ENCODE measurements at regions of chr1 and their contacts with region 1.

Region 1: GRCh38 chr1:37978541-37978940 is 11.3 kb downstream of the SF3A3 start:
- DNase-seq: no peak
- ATAC-seq: no peak
- H3K4me3 ChIP-seq: no peak overlapping the region
- H3K4me3 Mint-ChIP-seq: no peak overlapping the region
- H3K27ac ChIP-seq: no peak overlapping the region
- H3K27ac Mint-ChIP-seq: no peak overlapping the region
- H3K4me1 ChIP-seq: no peaks in the 10 kb centered on the region
- H3K4me1 Mint-ChIP-seq: peaks cover 5% of the 10 kb centered on the region
- H3K27me3 ChIP-seq: no peaks in the 10 kb centered on the region
- H3K27me3 Mint-ChIP-seq: no peaks in the 10 kb centered on the region
- CTCF ChIP-seq: no peak

Region 2: DNA sequence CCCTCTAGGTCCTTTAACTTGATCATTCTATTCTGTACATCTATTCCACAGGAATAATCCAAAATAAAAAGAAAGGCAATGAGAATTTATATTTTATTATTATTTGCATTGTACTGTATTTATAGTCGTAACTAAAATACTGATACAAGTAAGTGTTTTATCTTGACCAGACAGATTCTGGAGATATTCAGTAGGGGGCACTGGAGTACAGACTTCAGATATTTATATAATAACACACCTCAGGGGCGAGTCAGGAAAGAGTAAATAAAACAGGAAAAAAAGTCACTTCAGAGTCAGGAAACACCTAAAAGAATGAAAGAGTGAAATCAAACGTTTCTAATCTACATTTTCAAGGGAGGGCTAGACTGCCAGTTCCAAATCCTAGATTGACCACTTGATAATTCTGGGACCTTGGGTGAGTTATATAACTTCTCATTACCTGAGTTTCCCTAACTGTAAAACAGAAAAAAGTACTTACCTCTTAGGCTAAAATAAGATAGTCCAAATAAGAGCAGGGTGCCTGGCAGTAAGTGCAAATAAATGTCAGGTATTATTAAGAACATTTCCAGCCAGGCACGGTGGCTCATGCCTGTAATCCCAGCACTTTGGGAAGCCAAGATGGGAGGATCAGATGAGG is 88.0 kb before region 1 on chr1:
- CTCF ChIA-PET with region 1: interaction called, 5 read pairs
- POLR2A ChIA-PET with region 1: no interaction called
- intact Hi-C with region 1: loop called (anchors 1 kb)
- DNase-seq: peak in 3 of 9 experiments; percentile 9 to 67 (median 56)
- ATAC-seq: peak; percentile 76
- H3K4me3 ChIP-seq: no peak overlapping the region
- H3K4me3 Mint-ChIP-seq: no peak overlapping the region
- H3K27ac ChIP-seq: peak overlapping the region in 1 of 2 experiments; percentile 22
- H3K27ac Mint-ChIP-seq: peak overlapping the region; percentile 67
- H3K4me1 ChIP-seq: peaks cover 5% of the 10 kb centered on the region
- H3K4me1 Mint-ChIP-seq: peaks cover 6% of the 10 kb centered on the region
- H3K27me3 ChIP-seq: no peaks in the 10 kb centered on the region
- H3K27me3 Mint-ChIP-seq: no peaks in the 10 kb centered on the region
- CTCF ChIP-seq: peak; percentile 80